ENCODE measurements at regions of chr17 and their contacts with region 1.

Region 1: GRCh38 chr17:3827124-3827773 is 18.8 kb downstream of the NCBP3 start:
- DNase-seq: no peak
- ATAC-seq: peak; percentile 68
- H3K4me3 Mint-ChIP-seq: no peak overlapping the region
- H3K27ac Mint-ChIP-seq: no peak overlapping the region
- H3K4me1 Mint-ChIP-seq: peaks cover 1% of the 10 kb centered on the region
- H3K27me3 Mint-ChIP-seq: no peaks in the 10 kb centered on the region
- CTCF ChIP-seq: no peak

Region 2: DNA sequence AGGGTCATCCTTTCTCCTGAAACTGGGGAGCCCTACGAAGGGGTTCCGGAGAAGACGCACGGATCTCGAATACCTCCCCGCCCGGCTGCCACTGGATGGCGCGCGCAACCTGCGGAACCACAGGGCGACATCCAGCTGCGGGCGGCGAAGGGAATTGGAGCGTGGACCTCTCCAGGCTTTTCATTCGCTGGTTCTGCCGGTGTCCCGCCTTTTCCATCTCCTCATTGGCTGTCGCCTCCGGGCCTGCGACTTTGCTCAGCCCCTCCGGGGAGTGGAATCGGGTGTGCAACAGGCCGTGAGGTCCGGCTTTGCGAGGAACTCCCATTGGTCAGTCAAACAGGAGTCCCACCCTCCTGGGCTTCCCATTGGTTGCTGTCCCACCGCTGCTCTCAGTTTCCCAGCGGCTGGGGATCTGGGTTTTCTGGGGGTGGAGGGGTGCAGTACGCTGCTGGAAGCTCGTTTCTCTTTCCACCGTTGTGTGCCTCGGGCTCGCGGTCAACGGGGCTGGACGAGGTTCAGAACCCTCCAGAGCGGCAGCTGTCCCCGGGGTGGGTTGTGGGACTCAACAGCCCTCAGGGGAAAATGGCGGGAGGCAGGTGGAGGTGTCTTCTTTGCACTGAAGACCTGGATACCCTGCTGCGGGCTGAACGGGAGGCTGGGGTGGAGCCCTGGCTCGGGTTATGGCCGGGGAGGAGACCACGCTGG is 778.3 kb before region 1 on chr17:
- CTCF ChIA-PET with region 1: interaction called, 10 read pairs
- POLR2A ChIA-PET with region 1: no interaction called
- intact Hi-C with region 1: loop called (anchors 5 kb)
- DNase-seq: peak; percentile 80
- ATAC-seq: peak; percentile 98
- H3K4me3 Mint-ChIP-seq: peak overlapping the region; percentile 92
- H3K27ac Mint-ChIP-seq: peak overlapping the region; percentile 83
- H3K4me1 Mint-ChIP-seq: peaks cover 8% of the 10 kb centered on the region
- H3K27me3 Mint-ChIP-seq: no peaks in the 10 kb centered on the region
- CTCF ChIP-seq: no peak

Region 3: DNA sequence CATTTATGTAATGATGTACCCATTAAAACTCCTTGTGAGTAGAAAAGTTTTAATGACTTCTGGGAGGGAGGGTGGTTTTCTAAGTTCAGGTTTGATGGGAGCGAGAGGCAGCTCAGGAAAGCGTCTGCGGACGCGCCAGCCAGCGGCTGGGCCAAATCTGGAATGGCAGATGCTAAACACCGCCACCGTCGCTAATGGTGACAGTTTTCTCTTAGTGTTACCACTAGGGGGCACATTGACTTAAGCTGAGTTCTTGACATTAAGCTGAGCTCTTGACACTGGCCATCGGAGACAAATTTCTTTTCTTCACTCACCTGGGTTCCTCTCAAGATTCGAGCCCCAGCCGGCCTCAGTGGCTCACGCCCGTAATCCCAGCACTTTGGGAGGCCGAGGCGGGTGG is 224.8 kb before region 1 on chr17:
- CTCF ChIA-PET with region 1: interaction called, 13 read pairs
- POLR2A ChIA-PET with region 1: interaction called, 3 read pairs
- intact Hi-C with region 1: no loop called
- DNase-seq: no peak
- ATAC-seq: peak; percentile 58
- H3K4me3 Mint-ChIP-seq: no peak overlapping the region
- H3K27ac Mint-ChIP-seq: no peak overlapping the region
- H3K4me1 Mint-ChIP-seq: peaks cover 4% of the 10 kb centered on the region
- H3K27me3 Mint-ChIP-seq: no peaks in the 10 kb centered on the region
- CTCF ChIP-seq: no peak

Region 4: GRCh38 chr17:3723556-3724369 is 103.5 kb before region 1 on chr17 and contains the start of gene HASPIN:
- CTCF ChIA-PET with region 1: interaction called, 16 read pairs
- POLR2A ChIA-PET with region 1: interaction called, 5 read pairs
- intact Hi-C with region 1: no loop called
- DNase-seq: peak; percentile 91
- ATAC-seq: peak; percentile 73
- H3K4me3 Mint-ChIP-seq: peak within 1 kb of the TSS; percentile 92
- H3K27ac Mint-ChIP-seq: peak within 1 kb of the TSS; percentile 85
- H3K4me1 Mint-ChIP-seq: peaks cover 72% of the 10 kb centered on the region
- H3K27me3 Mint-ChIP-seq: no peaks in the 10 kb centered on the region
- CTCF ChIP-seq: no peak
- total RNA-seq, gene HASPIN: 6.4 and 6.7 TPM in 2 replicates

Region 5: GRCh38 chr17:3773511-3773910 is 53.7 kb before region 1 on chr17:
- CTCF ChIA-PET with region 1: interaction called, 5 read pairs
- POLR2A ChIA-PET with region 1: no interaction called
- intact Hi-C with region 1: loop called (anchors 2 kb)
- DNase-seq: no peak
- ATAC-seq: no peak
- H3K4me3 Mint-ChIP-seq: no peak overlapping the region
- H3K27ac Mint-ChIP-seq: no peak overlapping the region
- H3K4me1 Mint-ChIP-seq: peaks cover 17% of the 10 kb centered on the region
- H3K27me3 Mint-ChIP-seq: no peaks in the 10 kb centered on the region
- CTCF ChIP-seq: no peak

Region 6: GRCh38 chr17:3913531-3914311 is 86.5 kb after region 1 on chr17:
- CTCF ChIA-PET with region 1: no interaction called
- POLR2A ChIA-PET with region 1: no interaction called
- intact Hi-C with region 1: no loop called
- DNase-seq: peak; percentile 87
- ATAC-seq: peak; percentile 64
- H3K4me3 Mint-ChIP-seq: peak overlapping the region; percentile 82
- H3K27ac Mint-ChIP-seq: peak overlapping the region; percentile 96
- H3K4me1 Mint-ChIP-seq: peaks cover 90% of the 10 kb centered on the region
- H3K27me3 Mint-ChIP-seq: no peaks in the 10 kb centered on the region
- CTCF ChIP-seq: peak; percentile 55